Right ventricle myocardium superior (tissue), 1 donor: ENCODE measurements at regions of chr18 and their contacts with region 1.

Region 1: DNA sequence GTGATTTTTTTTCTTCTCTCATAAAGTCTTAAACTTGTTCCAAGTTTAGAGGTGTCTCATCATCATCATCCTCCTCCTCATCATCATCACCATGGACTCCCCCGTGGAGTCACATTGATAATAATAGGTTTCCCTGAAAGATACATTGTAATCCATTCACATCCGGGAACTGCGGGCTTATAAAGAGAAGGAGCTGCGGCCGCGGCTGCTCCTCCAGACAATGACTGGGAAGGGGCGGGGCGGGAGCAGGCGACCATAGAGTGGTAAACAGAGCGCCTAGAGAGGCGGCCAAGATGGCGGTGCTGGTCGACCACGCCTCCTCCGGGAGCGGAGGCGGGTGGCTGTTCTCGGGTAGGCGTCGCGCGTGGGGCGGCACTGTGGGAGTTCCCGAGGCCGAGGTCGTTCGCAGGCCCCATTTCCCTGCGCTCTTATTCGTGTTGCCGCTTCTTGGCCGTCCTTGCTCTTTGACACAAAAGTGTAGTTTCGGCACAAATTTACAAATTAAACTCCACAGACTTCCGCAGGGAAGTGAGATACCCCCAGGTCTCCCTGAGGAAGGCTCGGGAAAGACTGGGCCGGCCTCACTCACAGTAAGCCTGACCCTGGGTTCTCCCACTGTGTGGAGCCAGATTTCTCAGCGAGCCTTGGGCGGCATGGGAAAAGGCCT is 1.8 kb upstream of the TCF4 start:
- DNase-seq: peak; percentile 98
- ATAC-seq: peak; percentile 98

Region 2: GRCh38 chr18:55322178-55322735 is 267.5 kb before region 1 on chr18:
- intact Hi-C with region 1: loop called (anchors 10 kb)
- DNase-seq: peak; percentile 91
- ATAC-seq: peak; percentile 91

Region 3: GRCh38 chr18:55422456-55423180 is 167.1 kb before region 1 on chr18:
- intact Hi-C with region 1: loop called (anchors 5 kb)
- DNase-seq: peak; percentile 56
- ATAC-seq: peak; percentile 57

Region 4: GRCh38 chr18:55509631-55510324 is 80.0 kb before region 1 on chr18:
- intact Hi-C with region 1: loop called (anchors 10 kb)
- DNase-seq: no peak
- ATAC-seq: peak; percentile 35

Region 5: GRCh38 chr18:55731594-55732042 is 141.9 kb after region 1 on chr18:
- intact Hi-C with region 1: no loop called
- DNase-seq: no peak
- ATAC-seq: no peak

Region 6: DNA sequence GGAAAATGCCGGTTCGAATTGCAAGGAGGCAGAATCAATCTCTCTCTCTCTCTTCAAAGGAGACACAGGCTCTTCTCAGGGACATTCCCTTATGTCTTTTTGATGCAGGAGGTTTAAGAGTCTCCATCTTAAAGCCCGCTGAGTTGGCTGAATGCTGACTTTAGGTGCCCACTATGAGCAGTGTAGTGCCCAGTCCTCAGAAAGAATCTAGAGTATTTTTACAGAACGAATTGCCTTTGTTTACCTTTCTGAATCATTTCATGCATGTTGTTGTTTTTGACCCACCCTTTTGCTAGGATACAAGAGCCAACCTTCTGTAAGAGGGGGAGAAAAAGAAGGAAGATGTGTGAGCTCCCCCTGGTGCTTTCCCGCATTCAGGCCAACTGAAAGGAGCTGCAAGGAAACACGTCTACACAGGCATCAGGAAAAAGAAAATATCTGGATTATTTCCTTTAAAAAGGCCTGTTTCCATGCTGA is 191.8 kb after region 1 on chr18:
- intact Hi-C with region 1: loop called (anchors 5 kb)
- DNase-seq: peak; percentile 50
- ATAC-seq: peak; percentile 62